Naive thymus-derived CD8-positive, alpha-beta T cell (primary cell): ENCODE measurements at regions of chr4 and their contacts with region 1.

Region 1: GRCh38 chr4:121823505-121824170 is at the start of gene CCNA2:
- DNase-seq: peak; percentile 87 to 97 (median 94)
- ATAC-seq: peak; percentile 97
- H3K4me3 Mint-ChIP-seq: peak within 1 kb of the TSS; percentile 85 to 99 (median 93)
- H3K27ac Mint-ChIP-seq: peak within 1 kb of the TSS; percentile 58 to 96 (median 90)
- H3K4me1 Mint-ChIP-seq: peaks cover 6 to 20% (median 18%) of the 10 kb centered on the region in 4 donors
- H3K27me3 Mint-ChIP-seq: peaks cover 0 to 1% (median 0%) of the 10 kb centered on the region in 5 donors
- polyA plus RNA-seq, gene CCNA2: 0.51 TPM in 1 of 3 donors, not detected in the others

Region 2: GRCh38 chr4:121800961-121801714 is 22.5 kb before region 1 on chr4 and contains the start of gene EXOSC9:
- POLR2A ChIA-PET with region 1: interaction called, 26 read pairs
- DNase-seq: peak; percentile 88 to 98 (median 94)
- ATAC-seq: peak; percentile 82 to 86
- H3K4me3 Mint-ChIP-seq: peak within 1 kb of the TSS; percentile 88 to 99 (median 95)
- H3K27ac Mint-ChIP-seq: peak within 1 kb of the TSS; percentile 97 to 100 (median 99)
- H3K4me1 Mint-ChIP-seq: peaks cover 11 to 52% (median 43%) of the 10 kb centered on the region in 4 donors
- H3K27me3 Mint-ChIP-seq: peaks cover 0 to 4% (median 0%) of the 10 kb centered on the region in 5 donors
- polyA plus RNA-seq, gene EXOSC9: 37.0 to 44.6 (median 38.4) TPM